ENCODE measurements at regions of chr5 and their contacts with region 1.

Region 1: DNA sequence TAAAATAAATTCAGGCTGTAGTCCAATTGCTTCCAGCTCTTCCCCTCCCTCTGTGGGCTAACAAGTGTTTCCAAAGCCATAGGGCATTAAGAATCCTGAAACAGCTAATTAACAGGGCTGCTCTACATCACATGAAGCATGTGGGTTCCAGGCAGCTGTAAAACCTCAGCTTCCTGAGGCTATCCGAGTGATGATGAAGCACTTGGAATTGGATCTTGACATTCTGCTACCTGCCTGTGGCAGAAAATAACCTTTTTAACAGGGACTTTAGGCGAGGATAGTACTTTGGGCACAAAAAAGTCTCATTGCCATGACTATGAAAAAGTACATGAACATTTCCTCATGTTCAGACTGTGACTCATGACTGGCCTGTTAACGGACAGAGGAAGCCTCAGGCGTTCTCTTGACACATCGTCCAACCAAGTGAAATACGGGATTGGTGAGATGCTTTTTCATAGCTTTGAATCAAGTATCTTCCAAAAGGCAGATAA is 107.1 kb downstream of the PDE4D start:
- DNase-seq: no peak
- H3K4me3 ChIP-seq: no peak overlapping the region
- H3K27ac ChIP-seq: no peak overlapping the region
- H3K4me1 ChIP-seq: no peaks in the 10 kb centered on the region
- H3K27me3 ChIP-seq: no peaks in the 10 kb centered on the region
- CTCF ChIP-seq: no peak

Region 2: DNA sequence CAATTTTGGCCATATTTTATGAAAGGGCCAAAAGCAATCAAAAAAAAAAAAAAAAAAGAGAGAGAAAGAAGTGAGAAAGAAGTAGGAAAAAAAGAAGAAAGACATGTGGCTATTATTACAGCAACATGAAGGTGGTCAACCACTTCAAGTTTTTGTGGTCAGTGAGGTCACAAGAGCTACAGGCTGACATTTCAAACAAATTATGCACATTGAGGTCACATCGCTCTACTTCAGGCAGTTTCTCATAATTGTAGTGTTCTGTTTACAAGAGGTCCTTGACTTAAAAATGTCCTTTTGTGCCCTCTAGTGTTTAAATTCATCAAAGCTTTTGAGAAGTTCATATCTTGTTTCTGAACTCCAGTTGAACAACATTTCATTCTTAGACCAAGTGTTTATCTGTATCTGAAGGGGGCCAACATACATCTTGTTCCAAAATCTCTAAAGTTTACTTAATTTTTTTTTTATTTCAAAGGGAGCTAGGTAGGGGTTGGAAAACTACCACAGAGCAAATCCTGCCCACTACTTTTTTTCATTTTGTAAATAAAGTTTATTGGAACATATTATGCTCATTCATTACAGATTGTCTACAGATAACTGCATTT is 405.9 kb before region 1 on chr5:
- intact Hi-C with region 1: loop called (anchors 10 kb)
- DNase-seq: no peak
- H3K4me3 ChIP-seq: no peak overlapping the region
- H3K27ac ChIP-seq: no peak overlapping the region
- H3K4me1 ChIP-seq: no peaks in the 10 kb centered on the region
- H3K27me3 ChIP-seq: no peaks in the 10 kb centered on the region
- CTCF ChIP-seq: peak; percentile 66

Measured in left ventricle myocardium inferior (tissue), 1 donor.